Prostate gland (tissue), 2 donors: ENCODE measurements at regions of chr16 and their contacts with region 1.

Region 1: GRCh38 chr16:15650019-15650697 is at the start of gene NDE1:
- DNase-seq: peak; percentile 95
- H3K4me3 ChIP-seq: peak within 1 kb of the TSS; percentile 88 to 92
- H3K27ac ChIP-seq: peak within 1 kb of the TSS; percentile 91 to 94
- H3K4me1 ChIP-seq: no peaks in the 10 kb centered on the region
- H3K27me3 ChIP-seq: no peaks in the 10 kb centered on the region
- CTCF ChIP-seq: no peak
- POLR2A ChIP-seq: peak; percentile 83
- total RNA-seq, gene NDE1: 34.3 to 39.3 TPM

Region 2: GRCh38 chr16:15539197-15539596 is 111.0 kb before region 1 on chr16:
- intact Hi-C with region 1: no loop called
- DNase-seq: no peak
- H3K4me3 ChIP-seq: no peak overlapping the region
- H3K27ac ChIP-seq: no peak overlapping the region
- H3K4me1 ChIP-seq: no peaks in the 10 kb centered on the region
- H3K27me3 ChIP-seq: no peaks in the 10 kb centered on the region
- CTCF ChIP-seq: no peak
- POLR2A ChIP-seq: no peak

Region 3: GRCh38 chr16:15672514-15673167 is 22.5 kb after region 1 on chr16:
- intact Hi-C with region 1: loop called (anchors 2 kb)
- DNase-seq: peak; percentile 95
- H3K4me3 ChIP-seq: no peak overlapping the region
- H3K27ac ChIP-seq: peak overlapping the region; percentile 86 to 91
- H3K4me1 ChIP-seq: peaks cover 5% of the 10 kb centered on the region
- H3K27me3 ChIP-seq: no peaks in the 10 kb centered on the region
- CTCF ChIP-seq: no peak
- POLR2A ChIP-seq: peak; percentile 42

Region 4: DNA sequence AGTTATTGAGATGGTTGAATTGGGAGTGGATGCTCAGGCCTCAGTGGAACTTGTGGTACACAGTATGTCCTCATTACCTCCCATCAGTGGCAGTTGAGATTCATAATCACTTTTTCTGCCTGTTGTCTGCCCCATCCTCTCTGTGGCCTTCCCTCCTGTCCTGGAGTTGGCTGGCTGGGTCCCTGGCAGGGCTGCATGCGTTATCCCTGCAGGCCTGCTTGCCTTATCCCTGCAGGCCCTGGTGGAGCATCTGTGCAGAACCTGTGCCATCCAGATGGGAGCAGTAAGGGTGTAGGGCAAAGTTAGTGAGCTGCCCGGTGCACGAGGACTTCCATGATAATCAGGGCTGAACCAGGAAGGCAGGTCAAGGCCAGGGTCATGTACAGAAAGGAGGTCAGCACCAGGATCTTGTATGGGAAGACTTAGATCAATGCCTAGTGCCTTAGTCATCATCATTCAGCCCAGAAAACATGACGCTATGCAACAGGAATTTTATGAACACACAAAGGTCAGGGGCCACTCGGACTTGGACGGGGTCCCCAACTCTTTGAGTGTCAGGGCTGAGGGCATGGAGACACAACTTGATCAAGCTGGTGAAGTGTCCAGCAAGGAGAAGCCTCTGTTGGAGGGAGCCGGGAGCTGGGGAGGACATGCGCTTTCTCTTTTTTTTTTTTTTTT is 346.4 kb after region 1 on chr16:
- intact Hi-C with region 1: no loop called
- DNase-seq: no peak
- H3K4me3 ChIP-seq: no peak overlapping the region
- H3K27ac ChIP-seq: no peak overlapping the region
- H3K4me1 ChIP-seq: no peaks in the 10 kb centered on the region
- H3K27me3 ChIP-seq: no peaks in the 10 kb centered on the region
- CTCF ChIP-seq: no peak
- POLR2A ChIP-seq: no peak